OCI-LY7 (cell line): ENCODE measurements at regions of chr3 and their contacts with region 1.

Region 1: GRCh38 chr3:248864-249520 is 52.4 kb downstream of the CHL1 start:
- DNase-seq: no peak
- H3K4me3 ChIP-seq: no peak overlapping the region
- H3K27ac ChIP-seq: no peak overlapping the region
- H3K4me1 ChIP-seq: no peaks in the 10 kb centered on the region
- CTCF ChIP-seq: no peak

Region 2: GRCh38 chr3:217099-217813 is 31.7 kb before region 1 on chr3:
- CTCF ChIA-PET with region 1: no interaction called
- POLR2A ChIA-PET with region 1: interaction called, 12 read pairs
- intact Hi-C with region 1: no loop called
- DNase-seq: no peak
- H3K4me3 ChIP-seq: no peak overlapping the region
- H3K27ac ChIP-seq: no peak overlapping the region
- H3K4me1 ChIP-seq: peaks cover 8% of the 10 kb centered on the region
- CTCF ChIP-seq: no peak

Region 3: DNA sequence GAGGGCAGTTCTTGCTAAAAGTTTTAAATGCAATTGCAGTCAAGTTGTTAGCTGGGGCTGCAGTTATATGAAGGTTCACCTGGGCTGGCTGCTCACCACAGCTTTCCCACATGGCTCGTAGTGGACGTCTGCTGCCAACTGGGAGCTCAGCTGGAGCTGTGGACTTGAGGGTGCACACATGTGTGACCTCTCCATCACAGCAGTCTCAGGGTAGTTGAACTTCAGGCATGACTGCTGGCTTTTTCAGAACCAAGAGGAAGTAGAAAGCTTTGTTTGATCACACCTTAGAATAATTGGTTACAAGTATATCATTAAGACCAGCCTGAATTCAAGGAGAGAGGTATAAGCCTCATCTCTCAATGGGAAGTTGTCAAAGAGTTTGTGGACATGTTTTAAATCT is 21.7 kb after region 1 on chr3:
- CTCF ChIA-PET with region 1: no interaction called
- POLR2A ChIA-PET with region 1: interaction called, 11 read pairs
- intact Hi-C with region 1: no loop called
- DNase-seq: peak; percentile 37
- H3K4me3 ChIP-seq: no peak overlapping the region
- H3K27ac ChIP-seq: no peak overlapping the region
- H3K4me1 ChIP-seq: peaks cover 21% of the 10 kb centered on the region
- CTCF ChIP-seq: no peak

Region 4: DNA sequence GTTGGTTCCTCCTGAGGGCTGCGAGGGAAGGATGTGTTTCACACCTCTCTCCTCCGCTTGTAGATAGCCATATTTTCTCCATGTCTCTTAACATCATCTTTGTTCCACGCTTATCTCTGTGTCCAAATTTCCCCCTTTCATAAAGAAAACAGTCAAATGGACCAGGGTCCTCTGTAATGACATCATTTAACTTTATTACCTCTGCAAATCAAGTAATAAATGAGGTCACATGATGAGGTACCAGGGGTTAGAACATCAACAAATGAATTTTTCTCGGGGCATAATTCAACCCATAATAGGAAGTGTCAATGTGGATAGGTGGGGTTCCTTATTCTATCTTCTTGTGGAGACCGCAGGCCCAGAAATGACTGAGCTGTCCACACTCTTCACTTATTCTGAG is 1569.8 kb after region 1 on chr3:
- CTCF ChIA-PET with region 1: no interaction called
- POLR2A ChIA-PET with region 1: no interaction called
- intact Hi-C with region 1: no loop called
- DNase-seq: no peak
- H3K4me3 ChIP-seq: no peak overlapping the region
- H3K27ac ChIP-seq: no peak overlapping the region
- H3K4me1 ChIP-seq: no peaks in the 10 kb centered on the region
- CTCF ChIP-seq: no peak